ENCODE measurements at regions of chr20 and their contacts with region 1.

Region 1: DNA sequence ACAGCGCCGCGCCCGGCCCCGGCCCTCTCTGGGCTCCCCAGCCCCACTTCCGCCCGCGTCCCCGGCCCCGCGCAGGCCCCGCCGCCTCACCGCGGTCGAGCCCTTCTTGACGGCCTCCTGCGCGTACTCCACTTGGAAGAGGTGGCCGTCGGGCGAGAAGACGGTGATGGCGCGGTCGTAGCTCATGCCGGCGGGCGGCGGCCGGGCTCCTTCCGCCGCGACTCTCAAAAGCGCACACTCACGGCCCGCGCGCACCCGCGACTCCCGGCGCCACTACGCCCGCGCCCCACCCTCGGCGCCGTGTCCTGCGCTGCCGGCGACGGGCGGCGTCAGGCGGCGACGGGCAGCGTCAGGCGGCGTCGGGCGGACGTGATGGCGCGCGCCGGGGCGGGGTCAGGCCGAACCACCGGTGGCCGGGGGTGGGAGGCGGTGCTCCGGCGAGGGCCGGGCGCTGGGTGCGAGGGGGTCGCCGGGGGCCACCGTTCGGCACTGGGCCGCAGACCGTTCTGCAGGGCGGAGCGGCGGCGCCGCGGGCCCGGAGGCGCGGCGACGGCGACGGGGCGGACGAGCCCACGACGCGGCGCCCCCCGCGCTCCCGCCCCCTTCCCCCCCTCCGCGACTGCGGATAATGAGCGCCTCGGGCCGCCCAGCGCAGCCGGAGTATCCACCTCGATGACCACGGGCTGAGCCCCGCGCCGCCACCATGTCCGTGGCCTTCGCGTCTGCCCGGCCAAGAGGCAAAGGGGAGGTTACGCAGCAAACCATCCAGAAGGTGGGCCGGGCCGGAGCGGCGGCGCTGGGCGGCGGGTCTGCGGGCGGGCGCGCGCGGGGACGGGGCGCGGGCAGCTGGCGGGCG is at the starts of genes PSMA7 and SS18L1:
- DNase-seq: peak; percentile 84
- H3K4me3 Mint-ChIP-seq: peak within 1 kb of the TSS; percentile 84
- H3K27ac Mint-ChIP-seq: peak within 1 kb of the TSS; percentile 97
- H3K4me1 Mint-ChIP-seq: peaks cover 31% of the 10 kb centered on the region
- H3K27me3 Mint-ChIP-seq: no peaks in the 10 kb centered on the region
- CTCF ChIP-seq: no peak
- total RNA-seq, gene PSMA7: 362 and 419 TPM in 2 replicates
- total RNA-seq, gene SS18L1: 16.1 and 17.9 TPM in 2 replicates

Region 2: GRCh38 chr20:62065669-62066338 is 77.5 kb before region 1 on chr20 and contains the start of gene TAF4:
- CTCF ChIA-PET with region 1: interaction called, 6 read pairs
- POLR2A ChIA-PET with region 1: interaction called, 40 read pairs
- intact Hi-C with region 1: no loop called
- DNase-seq: peak; percentile 70
- H3K4me3 Mint-ChIP-seq: peak within 1 kb of the TSS; percentile 81
- H3K27ac Mint-ChIP-seq: peak within 1 kb of the TSS; percentile 75
- H3K4me1 Mint-ChIP-seq: peaks cover 20% of the 10 kb centered on the region
- H3K27me3 Mint-ChIP-seq: no peaks in the 10 kb centered on the region
- CTCF ChIP-seq: no peak
- total RNA-seq, gene TAF4: 15.9 and 16.1 TPM in 2 replicates

Region 3: GRCh38 chr20:62201173-62202082 is 58.1 kb after region 1 on chr20:
- CTCF ChIA-PET with region 1: no interaction called
- POLR2A ChIA-PET with region 1: no interaction called
- intact Hi-C with region 1: no loop called
- DNase-seq: no peak
- H3K4me3 Mint-ChIP-seq: no peak overlapping the region
- H3K27ac Mint-ChIP-seq: no peak overlapping the region
- H3K4me1 Mint-ChIP-seq: no peaks in the 10 kb centered on the region
- H3K27me3 Mint-ChIP-seq: no peaks in the 10 kb centered on the region
- CTCF ChIP-seq: no peak

Region 4: GRCh38 chr20:62590301-62591121 is 447.2 kb after region 1 on chr20:
- CTCF ChIA-PET with region 1: no interaction called
- POLR2A ChIA-PET with region 1: no interaction called
- intact Hi-C with region 1: no loop called
- DNase-seq: peak; percentile 93
- H3K4me3 Mint-ChIP-seq: no peak overlapping the region
- H3K27ac Mint-ChIP-seq: no peak overlapping the region
- H3K4me1 Mint-ChIP-seq: peaks cover 19% of the 10 kb centered on the region
- H3K27me3 Mint-ChIP-seq: peaks cover 5% of the 10 kb centered on the region
- CTCF ChIP-seq: no peak

Measured in MCF 10A (cell line).